A549 (cell line): ENCODE measurements at regions of chr7 and their contacts with region 1.

Region 1: DNA sequence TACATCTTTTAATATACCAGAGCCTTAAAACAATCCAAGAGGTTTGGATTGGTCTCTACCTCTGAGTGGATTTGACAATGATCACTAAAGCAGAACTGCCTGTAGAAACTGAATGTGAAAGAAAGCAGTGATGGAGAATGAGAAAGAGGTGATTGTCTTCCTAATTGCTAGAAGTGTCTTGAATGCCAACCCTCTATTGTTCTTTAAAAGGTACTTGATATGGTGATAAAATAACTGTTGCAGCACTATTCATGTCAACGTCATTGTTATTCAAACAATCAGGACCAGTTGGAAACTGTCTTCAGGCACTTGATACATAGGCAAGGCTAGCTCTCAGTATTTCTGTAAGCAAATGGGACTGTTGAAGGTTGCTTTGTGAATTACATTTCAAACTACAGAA is 47.9 kb upstream of the ITPRID1 start:
- DNase-seq: no peak
- ATAC-seq: no peak
- H3K4me3 ChIP-seq: no peak overlapping the region
- H3K27ac ChIP-seq: no peak overlapping the region; a peak in 2 of 6 replicates
- H3K4me1 ChIP-seq: peaks cover 33% of the 10 kb centered on the region
- CTCF ChIP-seq: no peak
- EP300 ChIP-seq: no peak
- POLR2A ChIP-seq: no peak
- RAD21 ChIP-seq: no peak

Region 2: GRCh38 chr7:31478721-31479120 is 12.7 kb after region 1 on chr7:
- CTCF ChIA-PET with region 1: interaction called, 10 read pairs
- POLR2A ChIA-PET with region 1: no interaction called
- DNase-seq: no peak
- ATAC-seq: no peak
- H3K4me3 ChIP-seq: no peak overlapping the region
- H3K27ac ChIP-seq: no peak overlapping the region
- H3K4me1 ChIP-seq: no peaks in the 10 kb centered on the region
- CTCF ChIP-seq: no peak
- EP300 ChIP-seq: no peak
- POLR2A ChIP-seq: no peak
- RAD21 ChIP-seq: no peak

Region 3: DNA sequence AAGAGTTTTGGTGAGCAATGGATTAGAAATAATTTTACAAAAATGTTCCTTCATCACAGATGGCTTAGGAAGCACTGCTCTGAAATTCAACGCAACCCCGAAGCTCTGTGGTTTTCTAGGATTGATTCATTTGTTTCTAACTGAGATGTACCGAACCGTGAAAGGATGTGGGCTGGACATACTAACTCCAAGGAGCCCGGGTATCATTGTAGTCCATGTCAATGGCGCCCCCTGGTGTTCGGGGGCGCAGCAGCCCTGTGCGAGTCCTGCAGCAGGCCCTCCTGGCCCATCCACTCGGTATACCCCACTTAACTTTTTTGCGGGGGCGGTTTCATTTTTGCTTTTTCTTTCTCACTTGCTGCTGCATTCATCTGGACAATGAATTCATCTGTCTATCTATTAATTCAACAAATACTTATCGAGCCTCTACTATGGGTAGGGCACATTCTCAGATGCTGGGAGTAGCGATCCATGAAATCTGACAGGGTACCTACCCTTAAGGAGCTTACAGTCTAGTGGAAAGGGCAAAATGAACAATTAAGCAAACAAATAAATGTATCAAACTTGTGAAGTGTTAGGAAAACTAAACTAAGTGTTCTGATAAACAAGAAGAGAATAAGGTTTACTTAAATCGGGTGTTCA is 22.6 kb after region 1 on chr7:
- CTCF ChIA-PET with region 1: interaction called, 13 read pairs
- POLR2A ChIA-PET with region 1: no interaction called
- DNase-seq: peak; percentile 65 to 69
- ATAC-seq: peak; percentile 98 to 100
- H3K4me3 ChIP-seq: no peak overlapping the region
- H3K27ac ChIP-seq: no peak overlapping the region
- H3K4me1 ChIP-seq: no peaks in the 10 kb centered on the region
- CTCF ChIP-seq: peak; percentile 83
- EP300 ChIP-seq: no peak
- POLR2A ChIP-seq: no peak
- RAD21 ChIP-seq: peak; percentile 89 to 92

Region 4: GRCh38 chr7:31705377-31705776 is 239.3 kb after region 1 on chr7:
- CTCF ChIA-PET with region 1: no interaction called
- POLR2A ChIA-PET with region 1: no interaction called
- DNase-seq: no peak
- ATAC-seq: no peak
- H3K4me3 ChIP-seq: no peak overlapping the region
- H3K27ac ChIP-seq: no peak overlapping the region
- H3K4me1 ChIP-seq: no peaks in the 10 kb centered on the region
- CTCF ChIP-seq: no peak
- EP300 ChIP-seq: no peak
- POLR2A ChIP-seq: no peak
- RAD21 ChIP-seq: no peak